CD4-positive, alpha-beta T cell (primary cell): ENCODE measurements at regions of chr7 and their contacts with region 1.

Region 1: GRCh38 chr7:23662124-23662983 is 17.6 kb upstream of the FAM221A start:
- DNase-seq: no peak
- ATAC-seq: no peak
- H3K4me3 ChIP-seq: no peak overlapping the region
- H3K4me3 Mint-ChIP-seq: no peak overlapping the region
- H3K27ac ChIP-seq: no peak overlapping the region
- H3K27ac Mint-ChIP-seq: no peak overlapping the region
- H3K4me1 ChIP-seq: no peaks in the 10 kb centered on the region
- H3K4me1 Mint-ChIP-seq: no peaks in the 10 kb centered on the region
- H3K27me3 ChIP-seq: no peaks in the 10 kb centered on the region
- H3K27me3 Mint-ChIP-seq: no peaks in the 10 kb centered on the region
- CTCF ChIP-seq: no peak

Region 2: DNA sequence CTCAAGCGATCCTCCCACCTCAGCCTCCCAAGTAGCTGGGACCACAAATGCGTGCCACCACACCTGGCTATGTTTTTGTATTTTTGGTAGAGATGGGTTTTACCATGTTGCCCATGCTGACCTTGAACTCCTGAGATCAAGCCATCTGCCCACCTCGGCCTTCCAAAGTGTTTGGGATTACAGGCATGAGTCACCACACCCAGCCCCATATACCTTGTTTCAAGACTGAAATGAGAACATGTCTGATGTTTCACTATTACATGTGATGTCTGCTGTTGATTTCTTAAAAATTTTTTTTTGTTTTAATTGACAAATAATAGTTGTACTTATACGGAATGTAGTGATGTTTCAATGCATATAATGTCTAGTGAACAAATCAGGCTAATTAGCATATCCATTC is 542.2 kb before region 1 on chr7:
- CTCF ChIA-PET with region 1: no interaction called
- POLR2A ChIA-PET with region 1: no interaction called
- intact Hi-C with region 1: loop called in 1 of 2 experiments (anchors 10 kb)
- DNase-seq: no peak
- ATAC-seq: no peak
- H3K4me3 ChIP-seq: no peak overlapping the region
- H3K4me3 Mint-ChIP-seq: no peak overlapping the region
- H3K27ac ChIP-seq: no peak overlapping the region
- H3K27ac Mint-ChIP-seq: no peak overlapping the region
- H3K4me1 ChIP-seq: no peaks in the 10 kb centered on the region
- H3K4me1 Mint-ChIP-seq: peaks cover 9% of the 10 kb centered on the region
- H3K27me3 ChIP-seq: no peaks in the 10 kb centered on the region
- H3K27me3 Mint-ChIP-seq: no peaks in the 10 kb centered on the region
- CTCF ChIP-seq: no peak

Region 3: GRCh38 chr7:23633417-23633816 is 28.9 kb before region 1 on chr7:
- CTCF ChIA-PET with region 1: no interaction called
- POLR2A ChIA-PET with region 1: no interaction called
- intact Hi-C with region 1: no loop called
- DNase-seq: no peak
- ATAC-seq: no peak
- H3K4me3 ChIP-seq: no peak overlapping the region
- H3K4me3 Mint-ChIP-seq: no peak overlapping the region
- H3K27ac ChIP-seq: no peak overlapping the region
- H3K27ac Mint-ChIP-seq: no peak overlapping the region
- H3K4me1 ChIP-seq: no peaks in the 10 kb centered on the region
- H3K4me1 Mint-ChIP-seq: peaks cover 3% of the 10 kb centered on the region
- H3K27me3 ChIP-seq: no peaks in the 10 kb centered on the region
- H3K27me3 Mint-ChIP-seq: no peaks in the 10 kb centered on the region
- CTCF ChIP-seq: no peak